ENCODE measurements at regions of chr7 and their contacts with region 1.

Region 1: GRCh38 chr7:79949778-79950177 is 184.9 kb upstream of the GNAI1 start:
- DNase-seq: no peak
- H3K4me3 ChIP-seq: no peak overlapping the region
- H3K27ac ChIP-seq: no peak overlapping the region
- H3K4me1 ChIP-seq: no peaks in the 10 kb centered on the region
- H3K27me3 ChIP-seq: no peaks in the 10 kb centered on the region
- CTCF ChIP-seq: no peak
- POLR2A ChIP-seq: no peak

Region 2: DNA sequence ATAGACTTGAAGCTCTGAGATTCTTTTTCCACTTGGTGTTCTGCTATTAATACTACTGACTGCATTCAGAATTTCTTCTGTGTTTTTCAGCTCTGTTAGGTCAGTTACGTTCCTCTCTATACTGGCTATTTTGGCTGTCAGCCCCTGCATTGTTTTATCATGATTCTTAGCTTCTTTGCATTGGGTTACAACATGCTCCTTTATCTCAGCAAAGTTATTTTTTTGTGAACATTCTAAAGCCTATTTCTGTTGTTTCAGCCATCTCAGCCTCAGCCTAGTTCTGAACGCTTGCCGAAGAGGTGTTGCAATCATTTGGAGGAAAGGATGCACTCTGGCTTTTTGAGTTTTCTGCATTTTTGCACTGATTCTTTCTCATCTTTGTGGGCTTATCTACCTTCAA is 16.6 kb before region 1 on chr7:
- intact Hi-C with region 1: no loop called
- DNase-seq: no peak
- H3K4me3 ChIP-seq: no peak overlapping the region
- H3K27ac ChIP-seq: no peak overlapping the region
- H3K4me1 ChIP-seq: no peaks in the 10 kb centered on the region
- H3K27me3 ChIP-seq: no peaks in the 10 kb centered on the region
- CTCF ChIP-seq: no peak
- POLR2A ChIP-seq: no peak

Region 3: GRCh38 chr7:79982141-79982770 is 32.5 kb after region 1 on chr7:
- intact Hi-C with region 1: loop called (anchors 1 kb)
- DNase-seq: no peak
- H3K4me3 ChIP-seq: no peak overlapping the region
- H3K27ac ChIP-seq: no peak overlapping the region
- H3K4me1 ChIP-seq: no peaks in the 10 kb centered on the region
- H3K27me3 ChIP-seq: no peaks in the 10 kb centered on the region
- CTCF ChIP-seq: no peak
- POLR2A ChIP-seq: no peak

Measured in vagina (tissue), 2 donors.